HCT116 (cell line): ENCODE measurements at regions of chr1 and their contacts with region 1.

Region 1: GRCh38 chr1:39098546-39099250 is 72.5 kb downstream of the NDUFS5 start:
- DNase-seq: peak; percentile 95
- ATAC-seq: peak; percentile 85
- H3K4me3 ChIP-seq: no peak overlapping the region
- H3K27ac ChIP-seq: no peak overlapping the region
- H3K4me1 ChIP-seq: peaks cover 11 to 23% of the 10 kb centered on the region in 2 experiments; a peak in 3 of 4 replicates
- H3K27me3 ChIP-seq: no peaks in the 10 kb centered on the region
- CTCF ChIP-seq: peak; percentile 66 to 91 (median 85)
- POLR2A ChIP-seq: no peak
- RAD21 ChIP-seq: peak; percentile 98

Region 2: DNA sequence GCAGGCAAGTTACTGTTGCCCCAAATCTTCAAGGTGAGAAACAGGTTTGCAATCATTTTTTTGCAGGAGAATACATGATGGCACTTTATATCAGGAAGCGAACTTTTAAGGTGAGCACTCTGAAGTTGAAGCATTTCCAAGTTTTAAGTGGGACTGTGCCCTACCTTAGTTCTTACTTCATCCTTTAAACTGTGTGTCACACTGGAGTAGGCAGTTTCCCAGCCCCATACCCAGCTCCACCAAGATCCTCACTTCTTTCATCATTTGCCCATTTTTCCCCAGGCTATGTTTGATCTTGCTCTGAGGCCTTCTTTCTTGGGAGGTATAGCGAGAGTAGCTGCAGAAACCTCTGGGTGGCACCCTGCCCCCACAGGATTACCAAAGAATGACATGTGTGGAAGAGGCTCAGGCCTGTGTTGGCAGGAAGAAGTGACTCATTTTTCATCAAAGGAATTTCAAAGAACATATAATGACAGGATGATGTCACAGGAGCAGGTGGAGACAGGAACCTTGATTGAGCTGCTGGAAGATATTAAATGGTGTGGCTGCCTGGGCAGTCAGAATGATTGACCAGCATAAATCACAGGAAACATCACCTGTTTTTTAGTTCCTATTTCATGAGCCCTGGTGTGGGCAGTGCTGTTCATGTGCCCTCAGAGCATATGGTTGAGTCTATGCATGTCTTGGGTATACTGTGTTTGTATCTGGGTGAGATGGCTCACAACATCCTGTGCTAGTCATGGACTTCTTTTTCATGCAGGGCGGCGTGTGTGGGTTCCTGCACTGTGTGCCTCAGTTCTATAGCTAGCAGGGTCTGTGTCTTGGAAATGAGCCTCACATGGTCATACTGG is 85.0 kb after region 1 on chr1:
- CTCF ChIA-PET with region 1: interaction called, 5 read pairs
- POLR2A ChIA-PET with region 1: no interaction called
- RAD21 ChIA-PET with region 1: no interaction called
- intact Hi-C with region 1: loop called (anchors 2 kb)
- DNase-seq: peak; percentile 96
- ATAC-seq: peak; percentile 91
- H3K4me3 ChIP-seq: peak overlapping the region in 1 of 2 experiments; percentile 18; a peak in 2 of 4 replicates
- H3K27ac ChIP-seq: peak overlapping the region; percentile 55
- H3K4me1 ChIP-seq: peaks cover 48 to 63% of the 10 kb centered on the region in 2 experiments
- H3K27me3 ChIP-seq: no peaks in the 10 kb centered on the region
- CTCF ChIP-seq: peak; percentile 42 to 66 (median 59); a peak in 5 of 6 replicates
- POLR2A ChIP-seq: no peak
- RAD21 ChIP-seq: peak; percentile 80

Region 3: DNA sequence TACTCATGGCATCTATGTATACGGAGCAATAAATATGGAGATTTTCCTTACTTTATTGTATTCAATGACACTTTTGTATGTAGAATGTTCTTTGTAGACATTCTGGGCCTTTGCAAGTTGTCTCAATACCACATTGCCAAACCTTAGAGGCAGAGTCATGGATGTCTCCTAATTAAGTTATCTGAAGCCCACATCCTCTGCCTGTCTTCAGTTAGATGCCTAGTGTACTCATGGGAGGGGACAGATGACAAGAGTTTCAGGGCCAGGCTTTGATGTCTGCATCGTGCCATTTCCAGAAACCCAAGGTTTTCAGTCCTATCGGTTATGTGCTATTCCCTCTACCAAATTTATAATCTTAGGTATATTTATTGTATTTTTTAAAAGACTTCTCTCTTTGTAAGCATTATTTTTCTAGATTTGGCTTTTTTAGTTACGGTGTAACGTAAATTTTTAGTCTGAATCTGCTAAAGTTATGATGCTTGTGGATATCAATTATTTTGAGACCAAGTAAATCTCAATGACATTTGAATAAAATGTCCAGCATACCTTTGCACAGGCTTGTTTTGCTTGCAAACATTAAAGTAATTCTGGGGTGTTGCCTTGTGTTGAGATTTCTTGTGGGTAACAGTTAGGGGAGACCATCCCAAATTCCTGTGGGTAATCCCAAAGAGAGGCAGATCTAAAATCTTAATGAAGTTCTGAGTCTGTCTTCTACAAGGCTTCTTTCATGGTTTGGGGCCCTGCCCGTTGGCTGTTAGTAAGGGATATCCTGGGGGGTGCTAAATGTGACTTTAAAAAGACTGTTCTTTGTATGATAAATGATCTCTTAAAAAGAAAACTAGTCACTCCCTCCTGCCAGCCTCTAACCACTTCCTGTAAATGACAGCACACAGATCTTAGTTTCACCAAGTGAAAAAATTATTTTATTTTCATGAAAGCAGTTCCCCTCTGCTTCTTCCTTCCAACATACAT is 97.8 kb after region 1 on chr1:
- CTCF ChIA-PET with region 1: interaction called, 47 read pairs
- POLR2A ChIA-PET with region 1: no interaction called
- RAD21 ChIA-PET with region 1: interaction called, 6 to 9 read pairs
- intact Hi-C with region 1: loop called (anchors 1 kb)
- DNase-seq: no peak
- ATAC-seq: peak; percentile 8; the same call in 1 of the 2 replicates
- H3K4me3 ChIP-seq: no peak overlapping the region
- H3K27ac ChIP-seq: peak overlapping the region; percentile 6; the same call in 1 of the 2 replicates
- H3K4me1 ChIP-seq: peaks cover 57 to 67% of the 10 kb centered on the region in 2 experiments
- H3K27me3 ChIP-seq: no peaks in the 10 kb centered on the region
- CTCF ChIP-seq: no peak
- POLR2A ChIP-seq: no peak
- RAD21 ChIP-seq: no peak

Region 4: GRCh38 chr1:39230261-39231190 is 131.8 kb after region 1 on chr1:
- CTCF ChIA-PET with region 1: no interaction called
- POLR2A ChIA-PET with region 1: no interaction called
- RAD21 ChIA-PET with region 1: no interaction called
- intact Hi-C with region 1: no loop called
- DNase-seq: no peak
- ATAC-seq: no peak
- H3K4me3 ChIP-seq: no peak overlapping the region
- H3K27ac ChIP-seq: no peak overlapping the region
- H3K4me1 ChIP-seq: no peaks in the 10 kb centered on the region
- H3K27me3 ChIP-seq: no peaks in the 10 kb centered on the region
- CTCF ChIP-seq: no peak
- POLR2A ChIP-seq: no peak
- RAD21 ChIP-seq: no peak

Region 5: GRCh38 chr1:39387452-39387851 is 288.8 kb after region 1 on chr1:
- CTCF ChIA-PET with region 1: interaction called, 12 read pairs
- POLR2A ChIA-PET with region 1: no interaction called
- RAD21 ChIA-PET with region 1: no interaction called
- intact Hi-C with region 1: loop called (anchors 1 kb)
- DNase-seq: peak; percentile 83
- ATAC-seq: peak; percentile 81
- H3K4me3 ChIP-seq: peak overlapping the region in 1 of 2 experiments; percentile 10; a peak in 1 of 4 replicates
- H3K27ac ChIP-seq: peak overlapping the region; percentile 78
- H3K4me1 ChIP-seq: peaks cover 32 to 58% of the 10 kb centered on the region in 2 experiments
- H3K27me3 ChIP-seq: no peaks in the 10 kb centered on the region
- CTCF ChIP-seq: peak; percentile 53 to 70 (median 64); a peak in 5 of 6 replicates
- POLR2A ChIP-seq: no peak
- RAD21 ChIP-seq: peak; percentile 87

Region 6: GRCh38 chr1:39609618-39610331 is 511.1 kb after region 1 on chr1:
- CTCF ChIA-PET with region 1: interaction called, 14 read pairs
- POLR2A ChIA-PET with region 1: no interaction called
- RAD21 ChIA-PET with region 1: no interaction called
- intact Hi-C with region 1: no loop called
- DNase-seq: peak; percentile 50
- ATAC-seq: peak; percentile 91
- H3K4me3 ChIP-seq: peak overlapping the region; percentile 28 to 32
- H3K27ac ChIP-seq: peak overlapping the region; percentile 15; the same call in 1 of the 2 replicates
- H3K4me1 ChIP-seq: peaks cover 2 to 18% of the 10 kb centered on the region in 2 experiments; a peak in 3 of 4 replicates
- H3K27me3 ChIP-seq: no peaks in the 10 kb centered on the region
- CTCF ChIP-seq: peak; percentile 77 to 95 (median 93)
- POLR2A ChIP-seq: peak; percentile 59
- RAD21 ChIP-seq: peak; percentile 46

Region 7: GRCh38 chr1:39720094-39720999 is 621.6 kb after region 1 on chr1:
- CTCF ChIA-PET with region 1: interaction called, 12 read pairs
- POLR2A ChIA-PET with region 1: no interaction called
- RAD21 ChIA-PET with region 1: interaction called in 1 of 2 experiments, 3 read pairs
- intact Hi-C with region 1: loop called (anchors 5 kb)
- DNase-seq: peak; percentile 48
- ATAC-seq: peak; percentile 82
- H3K4me3 ChIP-seq: peak overlapping the region in 1 of 2 experiments; percentile 35; a peak in 1 of 4 replicates
- H3K27ac ChIP-seq: no peak overlapping the region
- H3K4me1 ChIP-seq: peaks cover 0 to 3% of the 10 kb centered on the region in 2 experiments; a peak in 1 of 4 replicates
- H3K27me3 ChIP-seq: peaks cover 4% of the 10 kb centered on the region; the same call in 1 of the 2 replicates
- CTCF ChIP-seq: peak; percentile 37 to 80 (median 70); a peak in 5 of 6 replicates
- POLR2A ChIP-seq: no peak
- RAD21 ChIP-seq: peak; percentile 85